ENCODE measurements at regions of chr15 and their contacts with region 1.

Region 1: DNA sequence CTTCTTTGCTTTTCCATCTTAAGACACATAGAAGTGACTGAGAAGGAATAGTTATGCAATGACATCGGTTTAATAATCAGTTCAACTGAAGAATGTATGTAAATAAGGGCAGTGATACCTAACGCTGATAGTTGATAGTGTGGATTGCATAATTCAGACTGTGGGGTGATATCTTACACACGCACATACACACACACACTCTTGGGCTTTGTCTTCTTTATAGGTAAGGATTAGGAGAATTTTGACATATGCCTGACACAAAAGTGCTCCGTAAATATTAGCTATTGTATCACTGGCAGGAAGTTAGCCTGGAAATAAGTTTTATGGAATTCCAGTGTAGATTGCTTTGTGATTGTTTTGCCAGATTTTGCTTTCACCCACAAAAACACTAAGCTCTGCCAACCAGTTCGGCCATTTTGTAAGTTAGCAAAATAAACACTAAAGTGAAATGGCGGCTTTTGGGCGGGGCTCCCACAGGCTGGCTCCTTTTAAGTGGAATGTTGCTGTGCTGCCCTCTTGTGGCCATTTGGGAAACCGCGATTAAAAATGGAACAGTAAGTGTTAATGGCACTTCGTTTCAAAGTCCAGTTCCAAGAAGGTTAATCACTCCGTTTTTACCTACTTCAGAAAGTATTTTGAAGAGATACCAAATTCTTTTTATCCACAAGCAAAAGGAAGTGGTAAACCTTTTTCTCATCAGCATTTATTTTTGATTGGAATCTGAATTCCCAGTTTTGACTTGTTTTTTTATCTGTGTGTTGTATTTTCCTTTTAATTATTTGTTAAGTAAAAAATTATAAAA is 17.7 kb downstream of the CHD2 start:
- DNase-seq: peak; percentile 96
- H3K4me3 Mint-ChIP-seq: peak overlapping the region; percentile 15
- H3K27ac Mint-ChIP-seq: peak overlapping the region; percentile 86
- H3K4me1 Mint-ChIP-seq: peaks cover 87% of the 10 kb centered on the region
- H3K27me3 Mint-ChIP-seq: no peaks in the 10 kb centered on the region

Region 2: GRCh38 chr15:92499731-92500530 is 417.9 kb before region 1 on chr15:
- CTCF ChIA-PET with region 1: no interaction called
- POLR2A ChIA-PET with region 1: no interaction called
- DNase-seq: no peak
- H3K4me3 Mint-ChIP-seq: no peak overlapping the region
- H3K27ac Mint-ChIP-seq: no peak overlapping the region
- H3K4me1 Mint-ChIP-seq: no peaks in the 10 kb centered on the region
- H3K27me3 Mint-ChIP-seq: peaks cover 15% of the 10 kb centered on the region

Region 3: GRCh38 chr15:92797168-92797951 is 120.4 kb before region 1 on chr15:
- CTCF ChIA-PET with region 1: interaction called, 246 read pairs
- POLR2A ChIA-PET with region 1: no interaction called
- DNase-seq: peak; percentile 75
- H3K4me3 Mint-ChIP-seq: no peak overlapping the region
- H3K27ac Mint-ChIP-seq: peak overlapping the region; percentile 65
- H3K4me1 Mint-ChIP-seq: peaks cover 23% of the 10 kb centered on the region
- H3K27me3 Mint-ChIP-seq: no peaks in the 10 kb centered on the region

Region 4: GRCh38 chr15:92903941-92904831 is 13.6 kb before region 1 on chr15:
- CTCF ChIA-PET with region 1: interaction called, 23 read pairs
- POLR2A ChIA-PET with region 1: interaction called, 6 read pairs
- DNase-seq: peak; percentile 99
- H3K4me3 Mint-ChIP-seq: peak overlapping the region; percentile 80
- H3K27ac Mint-ChIP-seq: peak overlapping the region; percentile 99
- H3K4me1 Mint-ChIP-seq: peaks cover 59% of the 10 kb centered on the region
- H3K27me3 Mint-ChIP-seq: no peaks in the 10 kb centered on the region

Measured in activated CD4-positive, alpha-beta T cell treated with anti-CD3 and anti-CD28 coated beads, Interleukin-2, amount 10 ng/mL, durations not matched to agents 7 days and 5 days (primary cell).